ENCODE measurements at regions of chr13 and their contacts with region 1.

Region 1: DNA sequence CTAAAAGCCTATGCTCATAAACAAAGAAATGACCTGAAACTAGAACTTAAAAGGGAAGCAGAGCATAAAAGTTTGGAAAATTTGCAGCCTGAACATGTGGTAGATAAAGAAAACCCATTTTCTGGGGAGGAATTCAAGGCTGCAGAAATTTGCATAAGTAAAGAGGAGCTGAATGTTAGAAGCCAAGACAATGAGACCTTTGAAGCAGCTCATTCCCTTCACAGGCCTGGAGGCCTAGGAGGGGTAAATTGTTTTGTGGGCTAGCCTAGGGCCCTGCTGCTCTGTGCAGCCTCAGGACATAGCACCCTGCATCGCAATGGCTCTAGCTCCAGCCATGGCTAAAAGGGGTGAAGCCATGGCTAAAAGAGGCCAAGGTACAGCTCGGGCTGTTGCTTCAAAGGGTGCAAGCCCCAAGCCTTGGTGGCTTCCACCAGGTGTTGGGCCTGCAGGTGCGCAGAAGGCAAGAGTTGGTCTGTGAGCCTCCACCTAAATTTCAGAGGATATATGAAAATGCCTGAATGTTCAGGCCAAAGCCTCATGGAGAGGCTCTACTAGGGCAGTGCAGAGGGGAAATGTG is 38.3 kb downstream of the ZIC2 start:
- DNase-seq: no peak
- H3K4me3 ChIP-seq: no peak overlapping the region
- H3K27ac ChIP-seq: no peak overlapping the region
- H3K4me1 ChIP-seq: no peaks in the 10 kb centered on the region
- H3K27me3 ChIP-seq: no peaks in the 10 kb centered on the region
- CTCF ChIP-seq: no peak

Region 2: DNA sequence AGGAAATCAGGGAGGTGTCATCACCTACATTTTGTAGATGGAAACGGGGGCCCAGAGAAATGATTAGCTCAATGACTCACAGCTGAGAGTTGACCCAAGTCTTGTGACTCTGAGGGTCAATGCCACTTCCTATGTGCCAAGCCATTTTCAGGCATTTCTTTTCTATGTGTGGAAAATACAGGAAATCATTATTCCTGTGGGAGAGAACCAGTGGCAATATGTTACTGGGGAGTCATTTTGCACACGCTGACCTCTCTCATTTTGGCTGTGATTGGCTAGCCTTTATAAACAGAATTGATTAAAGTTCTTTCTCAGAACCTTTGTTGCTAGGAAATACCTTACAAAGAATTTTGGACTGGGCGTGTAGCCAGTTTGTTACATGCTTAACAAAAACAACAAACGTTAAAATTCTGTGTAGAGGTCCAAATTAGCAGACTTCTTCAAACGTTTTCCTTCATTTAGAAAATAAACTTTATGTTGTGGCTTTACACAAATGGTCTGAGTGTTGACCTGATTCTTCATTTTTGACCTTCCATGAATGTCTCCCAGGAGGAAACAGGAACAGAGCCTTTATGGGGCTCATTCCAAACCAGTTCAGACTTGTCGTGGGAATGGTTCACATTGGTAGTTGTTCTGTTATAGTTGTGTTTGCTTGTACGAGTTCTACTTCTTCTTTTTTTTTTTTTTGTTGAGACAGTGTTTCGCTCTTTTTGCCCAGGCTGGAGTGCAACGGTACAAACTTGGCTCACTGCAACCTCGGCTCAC is 80.4 kb after region 1 on chr13:
- CTCF ChIA-PET with region 1: no interaction called
- POLR2A ChIA-PET with region 1: no interaction called
- intact Hi-C with region 1: no loop called
- DNase-seq: peak; percentile 23
- H3K4me3 ChIP-seq: no peak overlapping the region
- H3K27ac ChIP-seq: peak overlapping the region; percentile 18
- H3K4me1 ChIP-seq: peaks cover 12% of the 10 kb centered on the region
- H3K27me3 ChIP-seq: no peaks in the 10 kb centered on the region
- CTCF ChIP-seq: no peak

Region 3: DNA sequence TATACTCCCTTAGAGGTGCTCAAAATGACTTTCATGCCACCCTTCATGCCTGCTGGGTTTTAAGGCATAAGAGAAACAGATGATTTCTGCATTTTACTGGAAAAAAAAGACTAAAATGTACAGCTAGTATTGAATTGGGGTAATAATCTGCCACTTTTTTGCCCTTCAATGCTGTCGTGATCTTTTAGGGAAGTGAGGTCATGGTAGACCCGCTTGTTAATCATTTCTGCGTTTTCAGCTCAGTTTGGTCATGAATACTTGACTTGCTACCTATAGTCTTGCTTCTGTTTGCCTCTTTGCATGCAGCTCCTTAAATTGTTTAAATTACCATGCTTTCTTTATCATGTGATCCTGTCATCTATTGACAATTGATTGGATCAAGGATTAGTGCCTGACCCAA is 159.4 kb after region 1 on chr13:
- CTCF ChIA-PET with region 1: no interaction called
- POLR2A ChIA-PET with region 1: interaction called, 18 read pairs
- intact Hi-C with region 1: no loop called
- DNase-seq: no peak
- H3K4me3 ChIP-seq: no peak overlapping the region
- H3K27ac ChIP-seq: no peak overlapping the region
- H3K4me1 ChIP-seq: peaks cover 39% of the 10 kb centered on the region
- H3K27me3 ChIP-seq: no peaks in the 10 kb centered on the region
- CTCF ChIP-seq: no peak

Region 4: GRCh38 chr13:100203696-100204367 is 184.0 kb after region 1 on chr13:
- CTCF ChIA-PET with region 1: no interaction called
- POLR2A ChIA-PET with region 1: no interaction called
- intact Hi-C with region 1: no loop called
- DNase-seq: peak; percentile 11
- H3K4me3 ChIP-seq: no peak overlapping the region
- H3K27ac ChIP-seq: no peak overlapping the region
- H3K4me1 ChIP-seq: no peaks in the 10 kb centered on the region
- H3K27me3 ChIP-seq: no peaks in the 10 kb centered on the region
- CTCF ChIP-seq: no peak

Region 5: DNA sequence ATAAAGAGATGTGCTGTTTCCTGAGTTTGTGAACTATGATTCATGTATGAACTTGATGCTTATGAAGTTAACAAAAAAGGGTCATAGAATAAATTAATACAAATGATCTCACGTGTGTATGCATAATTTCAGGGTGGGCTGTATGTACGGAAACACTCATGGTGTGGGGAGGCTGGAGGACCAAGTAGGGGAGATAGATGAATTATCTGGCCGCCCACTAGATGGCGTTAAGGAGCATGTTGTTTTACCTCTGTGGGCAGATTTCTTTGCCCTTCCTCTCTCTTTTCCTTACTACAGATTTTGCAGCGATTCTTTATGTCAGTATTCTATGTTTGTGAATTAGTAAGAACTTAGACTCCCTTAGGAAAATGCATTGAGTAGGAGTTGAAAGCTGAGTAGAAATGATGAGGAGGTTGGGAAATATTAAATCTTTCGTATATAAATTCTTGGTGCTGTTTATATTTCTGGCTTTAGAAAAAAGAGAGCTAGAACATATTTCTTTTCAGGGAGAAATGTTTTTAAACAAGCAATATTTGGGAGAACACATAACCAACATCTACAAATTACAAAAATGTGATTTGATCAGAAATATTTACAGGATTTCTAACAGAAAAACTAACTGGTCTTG is 702.1 kb after region 1 on chr13:
- CTCF ChIA-PET with region 1: no interaction called
- POLR2A ChIA-PET with region 1: no interaction called
- intact Hi-C with region 1: no loop called
- DNase-seq: peak; percentile 68
- H3K4me3 ChIP-seq: no peak overlapping the region
- H3K27ac ChIP-seq: no peak overlapping the region
- H3K4me1 ChIP-seq: no peaks in the 10 kb centered on the region
- H3K27me3 ChIP-seq: no peaks in the 10 kb centered on the region
- CTCF ChIP-seq: peak; percentile 81